ENCODE measurements at regions of chr17 and their contacts with region 1.

Region 1: GRCh38 chr17:65181237-65182061 is 44.3 kb downstream of the RGS9 start:
- DNase-seq: peak; percentile 76
- ATAC-seq: peak; percentile 56
- H3K4me3 Mint-ChIP-seq: peak overlapping the region; percentile 21
- H3K27ac Mint-ChIP-seq: peak overlapping the region; percentile 90
- H3K4me1 Mint-ChIP-seq: peaks cover 81% of the 10 kb centered on the region
- H3K27me3 Mint-ChIP-seq: peaks cover 5% of the 10 kb centered on the region

Region 2: GRCh38 chr17:65198653-65199382 is 17.4 kb after region 1 on chr17:
- CTCF ChIA-PET with region 1: interaction called, 15 read pairs
- DNase-seq: no peak
- ATAC-seq: peak; percentile 65
- H3K4me3 Mint-ChIP-seq: no peak overlapping the region
- H3K27ac Mint-ChIP-seq: no peak overlapping the region
- H3K4me1 Mint-ChIP-seq: peaks cover 12% of the 10 kb centered on the region
- H3K27me3 Mint-ChIP-seq: peaks cover 3% of the 10 kb centered on the region

Measured in activated CD8-positive, alpha-beta memory T cell treated with anti-CD3 and anti-CD28 coated beads, Interleukin-2, amount 10 ng/mL, durations not matched to agents 7 days and 5 days (primary cell).